Activated CD4-positive, alpha-beta T cell treated with anti-CD3 and anti-CD28 coated beads, Interleukin-2, amount 10 ng/mL, durations not matched to agents 7 days and 5 days (primary cell): ENCODE measurements at regions of chr3 and their contacts with region 1.

Region 1: GRCh38 chr3:48088749-48089466 is 72.7 kb upstream of the MAP4 start:
- DNase-seq: peak; percentile 95
- H3K4me3 Mint-ChIP-seq: peak overlapping the region; percentile 93
- H3K27ac Mint-ChIP-seq: peak overlapping the region; percentile 99
- H3K4me1 Mint-ChIP-seq: peaks cover 38% of the 10 kb centered on the region
- H3K27me3 Mint-ChIP-seq: no peaks in the 10 kb centered on the region

Region 2: GRCh38 chr3:48077815-48078214 is 11.1 kb before region 1 on chr3:
- CTCF ChIA-PET with region 1: interaction called, 10 read pairs
- POLR2A ChIA-PET with region 1: no interaction called
- DNase-seq: no peak
- H3K4me3 Mint-ChIP-seq: no peak overlapping the region
- H3K27ac Mint-ChIP-seq: no peak overlapping the region
- H3K4me1 Mint-ChIP-seq: no peaks in the 10 kb centered on the region
- H3K27me3 Mint-ChIP-seq: no peaks in the 10 kb centered on the region

Region 3: DNA sequence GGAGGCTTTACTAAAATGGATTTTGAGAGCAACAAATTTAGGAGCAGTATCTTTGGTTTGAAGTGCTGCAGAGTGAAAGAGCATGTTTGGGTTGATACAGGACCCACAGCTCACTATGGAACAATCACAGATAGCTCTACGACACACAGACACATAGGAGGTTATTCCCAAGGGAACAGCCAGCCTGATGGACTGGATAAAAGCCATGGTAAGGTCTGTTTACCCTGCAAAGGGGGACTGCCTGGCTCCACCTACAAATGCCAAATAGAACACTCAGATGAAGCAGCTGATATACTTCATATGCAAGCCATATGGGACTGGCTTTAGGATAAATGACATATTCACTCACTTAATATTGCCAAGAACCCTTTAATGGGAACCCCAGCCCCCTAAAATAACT is 23.9 kb after region 1 on chr3:
- CTCF ChIA-PET with region 1: interaction called, 4 read pairs
- POLR2A ChIA-PET with region 1: interaction called, 10 read pairs
- DNase-seq: no peak
- H3K4me3 Mint-ChIP-seq: peak overlapping the region; percentile 18
- H3K27ac Mint-ChIP-seq: peak overlapping the region; percentile 81
- H3K4me1 Mint-ChIP-seq: peaks cover 32% of the 10 kb centered on the region
- H3K27me3 Mint-ChIP-seq: no peaks in the 10 kb centered on the region